ENCODE measurements at regions of chr3 and their contacts with region 1.

Region 1: GRCh38 chr3:50495609-50496423 is 7.6 kb downstream of the CACNA2D2 start:
- DNase-seq: no peak
- ATAC-seq: no peak
- H3K4me3 ChIP-seq: no peak overlapping the region
- H3K27ac ChIP-seq: no peak overlapping the region
- H3K4me1 ChIP-seq: peaks cover 0 to 2% (median 0%) of the 10 kb centered on the region in 12 donors
- H3K27me3 ChIP-seq: no peaks in the 10 kb centered on the region
- CTCF ChIP-seq: no peak
- POLR2A ChIP-seq: no peak

Region 2: DNA sequence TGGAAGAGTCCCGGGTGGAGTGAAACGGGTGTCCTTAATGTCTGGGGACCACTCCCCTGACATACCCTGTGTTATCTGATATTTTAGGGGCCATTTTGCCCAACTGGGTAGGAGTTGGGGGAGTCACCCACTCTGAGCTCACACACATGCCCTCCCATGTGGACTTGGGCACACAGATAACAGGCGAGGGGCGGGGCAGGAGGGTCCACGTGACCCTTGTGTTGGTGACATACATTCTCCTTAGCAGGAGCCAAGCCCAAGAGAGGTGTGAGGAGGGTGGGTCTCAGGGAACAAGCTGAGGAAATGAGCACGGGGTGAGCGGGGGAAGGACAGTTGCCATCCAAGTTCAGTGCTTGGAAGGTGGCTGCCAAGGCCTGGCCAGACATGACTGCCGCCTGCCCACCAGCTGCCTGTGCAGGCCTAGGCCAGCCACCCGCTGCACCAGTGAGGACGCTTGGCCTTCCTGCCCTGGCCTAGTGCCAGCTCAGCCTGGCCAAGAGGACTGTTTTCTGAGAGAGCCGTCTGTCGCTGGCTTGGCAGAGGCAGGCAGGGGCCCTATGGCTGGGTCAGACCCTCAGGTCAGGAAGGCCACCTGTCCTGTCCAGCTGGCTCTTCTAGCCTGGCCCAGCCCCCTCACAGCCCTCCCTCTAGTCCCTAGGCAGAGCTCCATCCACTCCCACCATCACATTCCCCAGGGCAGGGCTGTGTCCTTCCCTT is 105.2 kb before region 1 on chr3:
- intact Hi-C with region 1: loop called in 1 of 10 experiments (anchors 5 kb)
- DNase-seq: peak; percentile 75 to 89 (median 83)
- ATAC-seq: peak; percentile 75 to 85 (median 83)
- H3K4me3 ChIP-seq: no peak overlapping the region
- H3K27ac ChIP-seq: peak overlapping the region in 9 of 12 donors; percentile 1 to 68 (median 50)
- H3K4me1 ChIP-seq: peaks cover 3 to 31% (median 16%) of the 10 kb centered on the region in 12 donors
- H3K27me3 ChIP-seq: no peaks in the 10 kb centered on the region
- CTCF ChIP-seq: no peak
- POLR2A ChIP-seq: no peak

Region 3: DNA sequence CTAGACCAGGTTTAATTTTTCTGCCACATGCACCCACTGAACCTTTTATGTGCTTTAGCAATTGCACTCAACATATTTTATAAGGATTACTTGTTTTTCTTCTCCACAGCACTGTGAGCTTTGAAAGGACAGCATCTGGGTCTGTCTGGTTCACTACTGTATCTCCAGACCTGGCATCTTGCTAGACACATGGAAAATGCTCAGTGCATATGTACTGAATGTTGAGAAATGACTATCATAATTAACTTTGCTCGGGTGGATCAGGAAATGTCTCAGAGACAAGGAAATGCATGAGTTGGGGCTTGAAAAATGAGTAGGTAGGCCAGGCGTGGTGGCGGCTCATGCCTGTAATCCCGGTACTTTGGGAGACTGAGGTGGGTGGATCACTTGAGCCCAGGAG is 219.1 kb after region 1 on chr3:
- intact Hi-C with region 1: no loop called
- DNase-seq: no peak
- ATAC-seq: no peak
- H3K4me3 ChIP-seq: no peak overlapping the region
- H3K27ac ChIP-seq: no peak overlapping the region
- H3K4me1 ChIP-seq: peaks cover 0 to 5% (median 0%) of the 10 kb centered on the region in 12 donors
- H3K27me3 ChIP-seq: no peaks in the 10 kb centered on the region
- CTCF ChIP-seq: no peak
- POLR2A ChIP-seq: no peak

Region 4: DNA sequence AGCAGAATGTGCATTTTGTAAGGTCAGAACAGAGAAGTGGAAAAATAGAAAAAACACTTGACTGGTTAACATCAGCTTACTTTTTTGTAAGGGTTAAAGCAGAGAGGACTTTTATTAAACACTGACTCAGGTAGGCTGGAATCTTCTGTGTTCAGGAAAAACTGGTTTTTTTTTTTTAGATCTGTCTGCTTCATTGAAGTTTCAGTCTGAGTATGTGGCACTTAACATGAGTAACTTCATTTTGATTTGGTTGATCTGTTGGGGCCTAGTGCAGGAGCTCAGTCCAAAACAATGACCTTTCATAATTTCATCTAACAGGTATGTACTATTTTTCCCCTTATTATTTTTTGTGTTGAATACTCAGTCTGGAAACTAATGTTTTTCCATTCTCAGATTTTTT is 320.1 kb after region 1 on chr3:
- intact Hi-C with region 1: no loop called
- DNase-seq: no peak
- ATAC-seq: no peak
- H3K4me3 ChIP-seq: no peak overlapping the region
- H3K27ac ChIP-seq: no peak overlapping the region
- H3K4me1 ChIP-seq: peaks cover 0 to 6% (median 0%) of the 10 kb centered on the region in 12 donors
- H3K27me3 ChIP-seq: no peaks in the 10 kb centered on the region
- CTCF ChIP-seq: no peak
- POLR2A ChIP-seq: no peak